Activated T-helper 2 cell treated with anti-CD3 and anti-CD28 coated beads, Interferon-gamma antibody, Interleukin-2, Interleukin-4, amounts not matched to agents 10 μg/mL and 5 μg/mL and 100 μg/mL, durations not matched to agents 14 hours and 24 hours and 36 hours (primary cell): ENCODE measurements at regions of chr21 and their contacts with region 1.

Region 1: DNA sequence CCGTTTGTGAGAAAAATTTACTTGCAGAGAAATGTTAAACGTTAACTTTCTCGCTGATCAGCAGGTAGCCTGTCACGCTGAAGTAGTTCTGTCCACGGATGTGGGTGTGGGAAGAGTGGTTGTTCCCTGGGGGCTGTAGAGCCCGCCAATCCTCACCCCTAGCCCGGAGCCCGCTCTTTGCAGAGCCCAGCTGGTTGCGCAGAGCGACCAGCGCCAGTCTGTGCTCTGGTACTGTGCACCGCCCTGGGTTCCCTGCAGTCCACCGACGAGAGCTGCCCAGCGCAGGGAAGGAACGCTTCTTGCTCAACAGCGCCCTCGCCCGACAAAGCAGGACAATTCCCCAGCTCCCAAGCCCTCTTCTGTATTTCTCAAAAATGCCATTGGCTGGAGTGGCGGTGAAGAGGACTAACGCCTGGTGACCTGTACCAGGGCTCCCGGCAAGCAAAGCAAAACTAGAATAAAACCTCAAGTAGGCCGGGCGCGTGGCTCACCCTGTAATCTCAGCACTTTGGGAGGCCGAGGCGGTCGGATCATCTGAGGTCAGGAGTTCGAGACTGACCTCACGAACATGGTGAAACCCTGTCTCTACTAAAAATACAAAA is 3.3 kb downstream of the RIPPLY3 start:
- DNase-seq: peak; percentile 69
- H3K4me3 Mint-ChIP-seq: peak overlapping the region; percentile 62
- H3K27ac Mint-ChIP-seq: no peak overlapping the region
- H3K4me1 Mint-ChIP-seq: peaks cover 13% of the 10 kb centered on the region
- H3K27me3 Mint-ChIP-seq: peaks cover 34% of the 10 kb centered on the region

Region 2: DNA sequence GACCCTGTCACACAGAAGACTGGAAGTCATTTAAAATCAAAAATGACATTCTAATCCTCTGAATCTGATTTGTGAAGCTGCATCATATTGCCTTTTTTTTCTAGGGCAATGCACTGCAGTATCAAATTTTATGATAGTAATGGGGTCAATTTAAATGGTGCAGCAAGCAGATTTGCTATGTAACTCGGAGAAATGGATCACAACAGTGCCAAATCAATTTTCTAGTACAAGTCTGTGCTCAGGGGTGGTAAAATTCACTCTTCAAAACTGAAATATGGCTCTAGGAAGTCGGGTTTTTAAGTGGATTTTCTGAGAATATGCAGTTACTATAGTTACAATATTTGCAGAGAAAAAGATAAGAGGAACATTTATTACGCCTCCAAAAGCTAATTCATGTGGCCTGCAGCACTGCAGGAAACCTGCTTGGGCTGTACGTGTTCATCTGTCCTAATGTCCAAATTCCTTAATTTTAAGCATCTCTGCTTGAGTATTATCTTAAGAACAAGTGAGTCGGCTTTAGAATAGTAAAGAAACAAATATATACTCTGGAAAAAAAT is 74.9 kb before region 1 on chr21:
- intact Hi-C with region 1: loop called (anchors 1 kb)
- DNase-seq: no peak
- H3K4me3 Mint-ChIP-seq: no peak overlapping the region
- H3K27ac Mint-ChIP-seq: no peak overlapping the region
- H3K4me1 Mint-ChIP-seq: no peaks in the 10 kb centered on the region
- H3K27me3 Mint-ChIP-seq: no peaks in the 10 kb centered on the region

Region 3: DNA sequence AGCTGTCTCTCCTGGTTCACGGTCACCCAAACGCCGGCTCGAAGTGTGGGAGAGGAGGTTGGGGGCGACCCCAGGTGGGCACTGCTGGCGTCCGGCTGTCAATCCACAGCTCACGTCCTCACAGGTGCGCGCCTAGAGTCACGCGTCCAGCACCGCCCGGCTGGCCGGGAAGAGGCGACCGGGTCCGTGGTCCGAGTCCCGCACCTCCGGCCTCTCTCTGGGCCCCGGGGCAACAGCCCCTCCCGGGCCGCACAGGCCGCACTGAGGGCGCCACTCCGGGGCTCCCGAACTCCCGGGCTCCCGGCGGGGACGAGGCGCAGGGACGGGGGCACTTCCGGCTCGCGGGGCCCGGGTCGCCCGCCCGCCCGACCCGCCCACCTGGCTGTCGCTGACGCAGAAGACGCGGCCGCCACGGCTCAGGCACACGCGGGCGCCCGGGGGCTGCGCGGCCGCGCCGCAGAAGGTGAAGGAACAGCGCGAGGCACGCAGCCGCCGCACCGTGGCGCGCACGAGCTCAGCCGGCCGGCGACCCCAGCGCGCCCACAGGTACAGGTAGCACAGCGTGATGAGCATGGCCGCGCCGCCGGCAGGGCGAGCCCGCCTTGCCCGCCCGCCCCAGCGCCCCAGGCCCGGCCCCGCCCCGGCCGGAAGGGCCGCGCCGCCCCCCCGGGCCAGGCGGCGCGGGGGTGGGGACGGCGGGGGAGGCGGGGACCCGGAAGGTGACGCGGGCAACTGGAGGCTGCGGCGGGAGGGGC is 43.6 kb before region 1 on chr21 and contains the start of gene HLCS:
- intact Hi-C with region 1: loop called (anchors 5 kb)
- DNase-seq: peak; percentile 66
- H3K4me3 Mint-ChIP-seq: peak within 1 kb of the TSS; percentile 84
- H3K27ac Mint-ChIP-seq: peak within 1 kb of the TSS; percentile 80
- H3K4me1 Mint-ChIP-seq: peaks cover 20% of the 10 kb centered on the region
- H3K27me3 Mint-ChIP-seq: no peaks in the 10 kb centered on the region
- total RNA-seq, gene HLCS: 17.2 and 18.7 TPM in 2 replicates